ENCODE measurements at regions of chr2 and their contacts with region 1.

Region 1: DNA sequence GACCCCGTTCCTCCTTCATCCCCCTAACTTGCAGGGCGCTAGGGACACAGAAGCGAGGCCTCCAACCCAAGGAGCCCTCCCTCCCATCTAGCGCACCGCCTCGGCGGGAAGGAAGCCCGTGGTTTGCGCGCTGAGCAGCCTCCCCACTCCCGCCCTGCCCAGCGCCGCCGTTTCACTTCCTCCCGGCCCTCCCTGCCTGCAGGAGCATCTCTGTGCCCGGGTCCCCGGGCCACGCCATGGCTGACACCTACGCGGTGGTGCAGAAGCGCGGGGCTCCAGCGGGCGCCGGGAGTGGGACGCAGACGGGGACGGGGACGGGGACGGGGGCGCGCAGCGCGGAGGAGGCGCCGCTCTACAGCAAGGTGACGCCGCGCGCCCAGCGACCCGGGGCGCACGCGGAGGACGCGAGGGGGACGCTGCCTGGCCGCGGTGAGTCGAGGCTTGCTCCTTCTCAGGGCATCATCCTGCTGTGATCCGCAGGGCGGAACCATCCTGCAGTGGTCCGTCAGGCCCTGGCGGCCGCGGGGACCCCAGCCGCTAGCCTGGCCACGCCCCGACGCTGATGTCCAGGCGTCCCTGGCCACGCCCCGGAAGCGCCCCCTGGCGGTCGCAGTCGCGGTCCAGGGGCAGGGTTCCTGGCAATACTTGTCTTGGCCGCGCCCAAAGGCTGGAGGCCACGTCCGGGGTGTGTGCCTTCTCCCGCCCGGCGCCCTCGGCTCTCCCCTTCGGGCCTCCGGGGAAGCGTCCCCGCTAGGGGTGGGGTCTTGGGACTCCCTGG is 16.4 kb downstream of the PTPN18 start:
- DNase-seq: peak; percentile 89
- CTCF ChIP-seq: peak; percentile 95

Region 2: DNA sequence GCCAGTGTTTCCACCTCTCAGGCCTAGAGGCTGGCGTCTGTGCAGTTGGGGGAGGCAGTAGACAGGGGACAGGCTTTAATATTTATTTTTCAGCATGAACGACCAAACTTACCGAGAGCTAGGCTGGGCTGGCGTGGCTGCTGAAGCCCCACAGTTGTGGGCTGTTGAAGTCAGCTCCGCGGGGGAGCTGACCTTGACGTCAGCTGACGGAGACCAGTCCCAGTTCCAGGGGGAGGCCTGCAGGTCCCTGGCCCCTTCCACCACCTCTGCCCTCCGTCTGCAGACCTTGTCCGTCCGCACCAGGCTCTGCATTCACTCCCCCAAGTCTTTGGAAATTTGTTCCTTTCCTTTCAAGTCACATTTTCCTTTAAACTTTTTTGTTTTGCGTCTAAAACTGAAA is 140.6 kb before region 1 on chr2:
- CTCF ChIA-PET with region 1: no interaction called
- POLR2A ChIA-PET with region 1: no interaction called
- DNase-seq: no peak
- CTCF ChIP-seq: no peak

Region 3: DNA sequence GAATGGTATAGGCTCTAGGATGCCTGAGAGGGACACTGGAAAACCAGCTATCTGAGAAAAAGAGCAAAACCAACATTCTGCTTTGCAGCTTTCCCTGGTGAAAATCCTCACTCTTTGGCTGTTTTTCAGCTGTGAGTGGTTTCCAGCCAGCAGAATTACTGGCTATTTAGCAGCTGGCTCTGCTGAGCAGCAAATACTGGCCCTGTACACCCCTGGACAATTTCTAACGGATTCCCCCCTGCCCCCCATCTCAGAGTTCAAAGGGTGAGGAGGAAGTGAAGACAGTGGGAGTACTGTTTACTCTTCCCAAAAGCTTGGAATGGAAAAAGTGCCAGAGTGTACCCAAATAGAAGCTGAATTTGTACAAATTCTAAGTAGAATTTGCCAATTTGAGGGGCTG is 55.6 kb before region 1 on chr2:
- CTCF ChIA-PET with region 1: no interaction called
- POLR2A ChIA-PET with region 1: no interaction called
- DNase-seq: no peak
- CTCF ChIP-seq: no peak

Region 4: DNA sequence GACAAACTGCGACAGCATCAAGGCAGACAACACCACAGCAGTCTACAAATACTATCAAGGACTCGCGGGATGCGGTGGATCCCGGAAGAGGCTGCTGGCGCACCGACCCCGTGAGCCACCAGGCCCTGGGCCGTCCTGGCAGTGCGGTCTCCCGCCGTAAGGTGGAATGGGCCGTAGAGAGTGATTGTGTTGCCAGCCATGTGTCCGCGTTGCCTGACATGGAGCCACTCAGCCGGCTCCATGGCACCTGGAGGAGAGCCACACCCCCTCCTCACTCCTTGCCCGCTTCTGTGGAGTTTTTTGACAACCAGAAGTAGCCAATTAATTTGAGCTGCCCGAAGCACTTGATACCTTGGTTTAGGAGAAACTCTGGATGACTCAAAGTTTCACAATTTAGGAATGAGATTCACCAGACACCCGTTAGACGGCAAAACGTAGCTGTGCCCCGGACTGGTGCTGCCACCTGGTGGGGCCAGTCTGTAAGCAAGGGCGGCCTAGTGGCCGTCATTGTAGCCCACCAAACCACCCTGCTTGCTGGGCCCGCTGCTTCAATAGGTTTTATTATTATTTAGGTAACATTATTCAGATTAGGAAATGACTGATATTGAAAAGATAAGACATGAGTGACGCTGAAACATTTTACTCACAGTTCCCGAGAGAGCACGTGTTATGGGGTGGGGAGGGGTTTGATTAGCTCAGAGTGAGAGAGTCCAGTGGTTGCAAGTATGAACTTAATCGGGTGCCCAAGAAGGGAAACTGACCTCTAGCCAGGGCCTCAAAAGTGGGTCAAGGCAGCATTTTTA is 39.8 kb before region 1 on chr2:
- CTCF ChIA-PET with region 1: interaction called, 10 read pairs
- POLR2A ChIA-PET with region 1: no interaction called
- DNase-seq: peak; percentile 83
- CTCF ChIP-seq: peak; percentile 92

Region 5: GRCh38 chr2:130342533-130343275 is 29.5 kb before region 1 on chr2 and contains the start of gene IMP4:
- CTCF ChIA-PET with region 1: interaction called, 35 read pairs
- POLR2A ChIA-PET with region 1: interaction called, 3 read pairs
- DNase-seq: peak; percentile 91
- CTCF ChIP-seq: no peak

Region 6: DNA sequence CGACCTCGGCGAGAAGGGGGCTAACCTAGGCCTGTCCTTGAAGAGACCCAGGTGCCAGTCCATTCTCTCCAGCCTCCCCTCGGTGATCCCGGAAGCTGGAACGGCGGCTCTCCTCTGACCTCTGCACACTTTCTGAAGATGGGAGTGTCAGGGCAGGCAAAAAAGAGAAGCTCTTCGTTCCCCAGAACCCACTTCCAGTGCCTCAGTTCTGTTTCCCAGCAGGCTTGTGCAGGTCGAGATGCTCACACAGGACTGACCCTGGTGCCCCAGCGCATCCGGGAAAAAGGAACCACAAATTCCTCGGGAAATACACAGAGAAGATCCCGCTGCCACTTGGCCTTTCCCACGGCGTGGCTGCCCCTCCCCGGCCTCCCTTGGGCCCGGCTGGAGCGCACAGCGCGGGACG is 17.1 kb before region 1 on chr2:
- CTCF ChIA-PET with region 1: interaction called, 51 read pairs
- POLR2A ChIA-PET with region 1: interaction called, 4 read pairs
- DNase-seq: no peak
- CTCF ChIP-seq: no peak

Region 7: GRCh38 chr2:130385709-130386108 is 13.5 kb after region 1 on chr2:
- CTCF ChIA-PET with region 1: interaction called, 51 read pairs
- POLR2A ChIA-PET with region 1: interaction called, 5 read pairs
- DNase-seq: no peak
- CTCF ChIP-seq: no peak

Region 8: GRCh38 chr2:130391058-130391871 is 19.0 kb after region 1 on chr2:
- CTCF ChIA-PET with region 1: interaction called, 51 read pairs
- POLR2A ChIA-PET with region 1: interaction called, 5 read pairs
- DNase-seq: peak; percentile 87
- CTCF ChIP-seq: no peak